ENCODE measurements at regions of chr7 and their contacts with region 1.

Region 1: DNA sequence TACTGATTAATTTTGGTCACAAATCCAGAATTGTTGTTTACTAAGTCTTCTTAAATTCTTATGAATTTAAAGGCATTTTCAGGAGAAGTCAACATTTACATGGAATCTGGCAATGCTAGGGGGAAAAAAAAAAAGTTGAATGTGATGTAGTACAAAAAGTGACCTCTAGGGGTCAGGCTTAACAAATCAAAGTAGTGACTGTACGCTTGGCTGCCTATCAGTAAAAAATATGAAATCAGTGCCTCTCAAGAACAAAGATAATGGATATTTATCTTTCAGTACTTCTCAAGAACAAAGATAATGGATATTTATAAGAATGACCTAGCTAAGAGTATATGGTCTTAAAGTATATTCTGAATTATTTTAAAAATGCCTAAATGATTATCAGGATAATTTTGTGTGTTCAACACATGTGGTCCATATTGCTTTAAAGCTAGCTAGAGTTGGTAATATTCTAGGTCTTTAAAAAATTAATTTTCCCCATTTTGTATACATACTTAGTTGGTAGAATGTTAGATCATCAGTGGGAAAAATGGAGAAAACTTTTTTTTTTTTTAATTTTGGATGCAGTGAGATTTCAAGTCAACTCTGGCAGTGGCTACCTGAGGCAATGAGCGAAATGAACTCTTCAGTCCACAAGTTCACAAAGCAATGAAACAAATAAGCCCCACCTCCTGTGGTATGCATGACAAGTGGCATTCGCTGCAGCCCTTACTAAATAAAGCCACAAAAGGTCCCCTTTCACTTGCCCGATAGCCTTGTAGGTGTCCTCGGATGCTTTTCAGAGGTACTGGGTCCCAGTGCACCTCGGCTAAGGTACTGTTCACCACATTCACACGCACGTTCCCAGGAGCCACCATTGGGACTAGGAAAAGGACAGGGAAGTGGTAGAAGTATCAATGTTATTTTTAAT is 51.2 kb upstream of the LAMB4 start:
- DNase-seq: no peak
- H3K4me3 ChIP-seq: no peak overlapping the region
- H3K27ac ChIP-seq: no peak overlapping the region
- H3K4me1 ChIP-seq: no peaks in the 10 kb centered on the region
- H3K27me3 ChIP-seq: no peaks in the 10 kb centered on the region
- CTCF ChIP-seq: peak; percentile 15 to 41 (median 22)
- EP300 ChIP-seq: no peak
- POLR2A ChIP-seq: no peak

Region 2: GRCh38 chr7:108012499-108013430 is 168.6 kb before region 1 on chr7:
- intact Hi-C with region 1: no loop called
- DNase-seq: no peak
- H3K4me3 ChIP-seq: no peak overlapping the region
- H3K27ac ChIP-seq: no peak overlapping the region
- H3K4me1 ChIP-seq: no peaks in the 10 kb centered on the region
- H3K27me3 ChIP-seq: no peaks in the 10 kb centered on the region
- CTCF ChIP-seq: no peak
- EP300 ChIP-seq: no peak
- POLR2A ChIP-seq: no peak

Region 3: GRCh38 chr7:108497082-108497725 is 315.9 kb after region 1 on chr7:
- intact Hi-C with region 1: loop called in 1 of 4 experiments (anchors 10 kb)
- DNase-seq: peak in 1 of 5 donors; percentile 22
- H3K4me3 ChIP-seq: no peak overlapping the region
- H3K27ac ChIP-seq: no peak overlapping the region
- H3K4me1 ChIP-seq: no peaks in the 10 kb centered on the region
- H3K27me3 ChIP-seq: no peaks in the 10 kb centered on the region
- CTCF ChIP-seq: peak in 2 of 3 donors; percentile 47 to 60
- EP300 ChIP-seq: no peak
- POLR2A ChIP-seq: no peak

Measured in ovary (tissue), 10 donors.